ENCODE measurements at regions of chr2 and their contacts with region 1.

Region 1: DNA sequence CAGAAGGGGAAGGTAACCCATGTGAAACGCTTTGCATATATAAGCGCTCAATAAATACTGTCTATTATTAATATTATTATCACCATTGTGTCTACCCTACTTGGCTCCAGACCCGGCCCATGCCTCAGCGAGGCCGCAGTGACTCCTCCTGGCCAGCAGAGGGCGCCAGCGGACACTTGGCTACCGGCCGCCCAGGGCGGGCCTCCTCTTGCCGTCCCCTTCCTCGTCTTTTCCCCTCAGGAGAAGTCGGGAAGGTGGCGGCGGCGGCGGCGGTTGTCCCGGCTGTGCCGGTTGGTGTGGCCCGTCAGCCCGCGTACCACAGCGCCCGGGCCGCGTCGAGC is at the start of gene AGFG1:
- DNase-seq: peak; percentile 81
- H3K4me3 Mint-ChIP-seq: peak within 1 kb of the TSS; percentile 88
- H3K27ac Mint-ChIP-seq: peak within 1 kb of the TSS; percentile 78
- H3K4me1 Mint-ChIP-seq: peaks cover 31% of the 10 kb centered on the region
- H3K27me3 Mint-ChIP-seq: no peaks in the 10 kb centered on the region
- total RNA-seq, gene AGFG1: 137 and 139 TPM in 2 replicates

Region 2: GRCh38 chr2:227423656-227424499 is 48.0 kb before region 1 on chr2:
- intact Hi-C with region 1: no loop called
- DNase-seq: no peak
- H3K4me3 Mint-ChIP-seq: no peak overlapping the region
- H3K27ac Mint-ChIP-seq: no peak overlapping the region
- H3K4me1 Mint-ChIP-seq: peaks cover 4% of the 10 kb centered on the region
- H3K27me3 Mint-ChIP-seq: no peaks in the 10 kb centered on the region

Region 3: DNA sequence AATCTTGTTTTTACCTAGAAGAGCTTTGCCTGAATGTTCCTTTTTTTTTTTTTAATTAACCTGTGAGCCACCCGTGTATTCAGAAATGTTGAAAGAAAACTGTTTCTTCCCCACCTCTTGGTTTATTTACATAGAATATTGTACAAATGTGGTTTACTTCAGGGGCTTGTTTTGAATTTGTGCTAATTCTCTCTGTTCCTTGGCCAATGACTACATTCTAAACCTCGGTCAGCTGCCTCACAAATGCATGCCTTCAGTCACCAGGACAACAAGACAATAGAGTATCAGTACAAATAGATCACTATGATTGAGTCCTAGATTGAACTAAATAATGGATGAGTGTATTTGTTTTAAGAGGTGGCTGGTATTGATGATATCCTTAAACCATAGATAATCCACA is 36.1 kb after region 1 on chr2:
- intact Hi-C with region 1: loop called (anchors 2 kb)
- DNase-seq: no peak
- H3K4me3 Mint-ChIP-seq: no peak overlapping the region
- H3K27ac Mint-ChIP-seq: no peak overlapping the region
- H3K4me1 Mint-ChIP-seq: peaks cover 48% of the 10 kb centered on the region
- H3K27me3 Mint-ChIP-seq: no peaks in the 10 kb centered on the region

Region 4: DNA sequence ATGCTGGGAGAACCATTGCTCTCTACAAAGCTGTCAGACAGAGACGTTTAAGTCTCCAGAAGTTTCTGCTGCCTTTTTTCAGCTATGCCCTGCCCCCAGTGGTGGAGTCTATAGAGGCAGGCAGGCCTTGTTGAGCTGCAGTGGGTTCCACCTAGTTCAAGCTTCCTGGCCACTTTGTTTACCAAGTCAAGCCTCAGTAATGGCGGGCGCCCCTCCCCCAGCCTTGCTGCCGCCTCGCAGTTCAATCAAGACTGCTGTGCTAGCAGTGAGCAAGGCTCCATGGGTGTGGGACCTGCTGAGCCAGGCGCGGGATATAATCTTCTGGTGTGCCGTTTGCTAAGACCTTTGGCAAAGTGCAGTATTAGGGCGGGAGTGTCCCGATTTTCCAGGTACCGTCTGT is 74.1 kb after region 1 on chr2:
- intact Hi-C with region 1: loop called (anchors 5 kb)
- DNase-seq: no peak
- H3K4me3 Mint-ChIP-seq: no peak overlapping the region
- H3K27ac Mint-ChIP-seq: no peak overlapping the region
- H3K4me1 Mint-ChIP-seq: peaks cover 13% of the 10 kb centered on the region
- H3K27me3 Mint-ChIP-seq: no peaks in the 10 kb centered on the region